Activated T-helper 2 cell treated with anti-CD3 and anti-CD28 coated beads, Interferon-gamma antibody, Interleukin-2, Interleukin-4, amounts not matched to agents 10 μg/mL and 5 μg/mL and 100 μg/mL, durations not matched to agents 14 hours and 24 hours and 36 hours (primary cell): ENCODE measurements at regions of chr17 and their contacts with region 1.

Region 1: GRCh38 chr17:56125830-56126819 is 27.1 kb upstream of the ANKFN1 start:
- DNase-seq: no peak
- H3K4me3 Mint-ChIP-seq: no peak overlapping the region
- H3K27ac Mint-ChIP-seq: no peak overlapping the region
- H3K4me1 Mint-ChIP-seq: no peaks in the 10 kb centered on the region
- H3K27me3 Mint-ChIP-seq: peaks cover 8% of the 10 kb centered on the region

Region 2: GRCh38 chr17:56064506-56064905 is 61.6 kb before region 1 on chr17:
- intact Hi-C with region 1: no loop called
- DNase-seq: no peak
- H3K4me3 Mint-ChIP-seq: no peak overlapping the region
- H3K27ac Mint-ChIP-seq: no peak overlapping the region
- H3K4me1 Mint-ChIP-seq: no peaks in the 10 kb centered on the region
- H3K27me3 Mint-ChIP-seq: no peaks in the 10 kb centered on the region

Region 3: DNA sequence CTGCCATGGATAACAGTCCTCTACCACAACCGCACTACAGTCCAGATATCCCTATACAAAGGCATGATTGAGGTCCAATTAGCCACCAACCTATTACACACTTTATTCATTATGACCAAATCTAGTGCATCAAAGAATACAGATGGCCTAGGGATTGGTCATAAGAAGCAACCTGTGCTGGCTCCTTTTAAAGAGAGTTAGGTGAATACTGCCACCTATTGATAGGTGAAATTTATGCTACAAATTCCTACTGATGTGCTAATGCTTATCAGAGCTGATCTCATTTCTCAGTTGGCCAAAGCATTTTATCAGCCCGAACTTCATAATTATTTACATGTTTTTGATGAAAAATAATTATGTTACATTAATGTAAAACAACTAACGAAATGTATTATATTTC is 193.4 kb after region 1 on chr17:
- intact Hi-C with region 1: loop called (anchors 5 kb)
- DNase-seq: no peak
- H3K4me3 Mint-ChIP-seq: no peak overlapping the region
- H3K27ac Mint-ChIP-seq: no peak overlapping the region
- H3K4me1 Mint-ChIP-seq: peaks cover 1% of the 10 kb centered on the region
- H3K27me3 Mint-ChIP-seq: peaks cover 14% of the 10 kb centered on the region